GM12878 (cell line): ENCODE measurements at regions of chr14 and their contacts with region 1.

Region 1: GRCh38 chr14:22668417-22668816 is 24.3 kb upstream of the OR6J1 start:
- DNase-seq: no peak
- ATAC-seq: peak; percentile 79
- H3K4me3 ChIP-seq: no peak overlapping the region
- H3K27ac ChIP-seq: no peak overlapping the region
- H3K4me1 ChIP-seq: no peaks in the 10 kb centered on the region
- H3K27me3 ChIP-seq: no peaks in the 10 kb centered on the region
- CTCF ChIP-seq: no peak
- EP300 ChIP-seq: no peak
- POLR2A ChIP-seq: no peak
- RAD21 ChIP-seq: no peak

Region 2: DNA sequence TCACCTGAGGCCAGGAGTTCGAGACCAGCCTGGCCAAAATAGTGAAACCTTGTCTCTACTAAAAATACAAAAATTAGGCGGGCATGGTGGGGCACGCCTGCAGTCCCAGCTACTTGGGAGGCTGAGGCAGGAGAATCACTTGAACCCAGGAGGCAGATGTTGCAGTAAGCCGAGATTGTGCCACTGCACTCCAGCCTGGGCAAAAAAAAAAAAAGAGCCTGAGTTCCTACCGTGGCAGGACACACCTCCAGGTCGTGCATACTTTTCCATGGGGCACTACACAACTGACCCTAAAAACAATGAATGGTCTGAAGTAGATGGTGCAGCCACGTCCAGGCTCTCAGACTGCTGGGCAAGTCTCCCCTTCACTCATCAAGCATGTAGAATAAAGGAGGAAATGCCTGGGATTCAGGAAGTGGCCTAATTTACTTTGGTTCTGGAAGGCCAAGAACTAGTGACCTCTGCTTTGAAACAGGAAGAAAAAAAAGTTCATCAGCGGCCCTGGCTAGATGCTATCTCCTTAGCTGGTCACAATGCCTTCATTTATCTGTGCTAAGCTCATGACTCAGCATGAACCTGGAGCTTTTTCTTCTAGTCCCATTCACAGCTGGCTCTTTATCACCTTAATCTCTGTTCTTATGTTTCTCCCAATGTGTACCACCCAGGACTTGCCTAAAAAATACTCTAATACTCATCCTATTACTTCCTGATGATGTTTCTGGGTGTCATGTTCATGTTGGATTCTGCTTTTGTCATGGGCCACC is 31.6 kb after region 1 on chr14:
- CTCF ChIA-PET with region 1: no interaction called
- POLR2A ChIA-PET with region 1: no interaction called
- RAD21 ChIA-PET with region 1: no interaction called
- SMC1A ChIA-PET with region 1: no interaction called
- in situ Hi-C with region 1: no loop called
- intact Hi-C with region 1: loop called (anchors 5 kb)
- DNase-seq: no peak
- ATAC-seq: no peak
- H3K4me3 ChIP-seq: no peak overlapping the region
- H3K27ac ChIP-seq: no peak overlapping the region
- H3K4me1 ChIP-seq: no peaks in the 10 kb centered on the region
- H3K27me3 ChIP-seq: no peaks in the 10 kb centered on the region; a peak in 1 of 4 replicates
- CTCF ChIP-seq: no peak
- EP300 ChIP-seq: no peak
- POLR2A ChIP-seq: no peak
- RAD21 ChIP-seq: no peak